ENCODE measurements at regions of chr4 and their contacts with region 1.

Region 1: DNA sequence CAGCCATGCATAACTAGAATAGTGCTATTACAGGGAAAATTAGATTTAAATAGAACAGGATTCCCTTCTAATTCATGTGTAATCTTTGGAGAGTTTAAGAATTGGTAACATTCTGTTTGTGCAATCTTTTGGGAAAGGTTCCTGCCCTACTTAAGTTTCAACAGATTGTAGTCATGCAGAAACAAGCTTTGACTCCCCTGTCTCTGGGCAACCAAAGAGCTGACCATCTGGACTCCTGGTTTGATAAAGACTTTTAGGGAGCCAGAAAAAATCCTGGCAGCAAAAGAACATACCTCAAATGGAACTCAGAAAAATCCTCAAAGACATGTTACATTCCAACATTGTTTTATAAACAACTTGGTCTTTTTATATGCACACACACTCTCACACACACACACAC is 191.1 kb upstream of the NEIL3 start:
- DNase-seq: peak; percentile 99
- ATAC-seq: peak; percentile 92
- H3K4me3 ChIP-seq: no peak overlapping the region
- H3K27ac ChIP-seq: peak overlapping the region; percentile 74; the same call in 1 of the 2 replicates
- H3K4me1 ChIP-seq: peaks cover 2% of the 10 kb centered on the region
- H3K27me3 ChIP-seq: no peaks in the 10 kb centered on the region
- CTCF ChIP-seq: no peak
- POLR2A ChIP-seq: no peak
- RAD21 ChIP-seq: no peak

Region 2: DNA sequence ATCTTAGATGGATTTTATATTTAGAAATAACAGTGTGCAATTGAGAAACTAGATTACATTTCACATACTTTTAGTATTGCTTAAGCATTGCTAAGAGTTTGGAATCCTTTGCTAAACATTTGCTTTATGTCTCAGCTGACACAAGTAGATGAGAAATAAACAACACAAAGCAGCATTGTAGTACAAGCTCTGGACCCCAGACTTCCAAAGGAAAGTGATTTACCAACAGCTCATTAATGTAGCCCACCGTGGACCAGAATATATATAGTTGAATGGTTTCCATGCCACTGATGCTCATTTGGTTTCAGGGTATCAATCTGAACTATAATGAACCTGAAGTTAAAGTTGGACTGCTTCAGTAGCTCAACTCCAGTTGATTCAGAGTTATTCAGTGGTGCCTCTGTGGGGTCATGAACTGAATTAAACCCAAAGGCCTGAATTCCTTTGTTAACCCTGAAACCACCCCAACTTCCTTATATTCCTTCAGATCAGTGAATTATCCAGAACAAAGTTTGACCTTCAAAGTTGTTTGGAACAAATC is 59.0 kb after region 1 on chr4:
- CTCF ChIA-PET with region 1: no interaction called
- POLR2A ChIA-PET with region 1: no interaction called
- dilution Hi-C with region 1: no loop called
- in situ Hi-C with region 1: no loop called
- intact Hi-C with region 1: loop called (anchors 2 kb)
- DNase-seq: peak; percentile 89
- ATAC-seq: peak; percentile 91
- H3K4me3 ChIP-seq: no peak overlapping the region
- H3K27ac ChIP-seq: peak overlapping the region; percentile 85
- H3K4me1 ChIP-seq: peaks cover 10% of the 10 kb centered on the region
- H3K27me3 ChIP-seq: no peaks in the 10 kb centered on the region
- CTCF ChIP-seq: no peak
- POLR2A ChIP-seq: no peak
- RAD21 ChIP-seq: no peak

Region 3: GRCh38 chr4:177339477-177340374 is 221.1 kb after region 1 on chr4:
- CTCF ChIA-PET with region 1: no interaction called
- POLR2A ChIA-PET with region 1: no interaction called
- dilution Hi-C with region 1: no loop called
- in situ Hi-C with region 1: loop called (anchors 10 kb)
- intact Hi-C with region 1: no loop called
- DNase-seq: peak; percentile 51
- ATAC-seq: peak; percentile 84
- H3K4me3 ChIP-seq: no peak overlapping the region
- H3K27ac ChIP-seq: no peak overlapping the region; the same call in 1 of the 2 replicates
- H3K4me1 ChIP-seq: peaks cover 2% of the 10 kb centered on the region; the same call in 1 of the 2 replicates
- H3K27me3 ChIP-seq: no peaks in the 10 kb centered on the region
- CTCF ChIP-seq: peak; percentile 79
- POLR2A ChIP-seq: no peak
- RAD21 ChIP-seq: peak; percentile 80

Region 4: GRCh38 chr4:177484613-177485021 is 366.0 kb after region 1 on chr4:
- CTCF ChIA-PET with region 1: no interaction called
- POLR2A ChIA-PET with region 1: no interaction called
- dilution Hi-C with region 1: no loop called
- in situ Hi-C with region 1: no loop called
- intact Hi-C with region 1: loop called (anchors 5 kb)
- DNase-seq: peak; percentile 97
- ATAC-seq: peak; percentile 75
- H3K4me3 ChIP-seq: no peak overlapping the region
- H3K27ac ChIP-seq: peak overlapping the region; percentile 96
- H3K4me1 ChIP-seq: peaks cover 10% of the 10 kb centered on the region
- H3K27me3 ChIP-seq: no peaks in the 10 kb centered on the region
- CTCF ChIP-seq: no peak
- POLR2A ChIP-seq: no peak
- RAD21 ChIP-seq: no peak

Region 5: GRCh38 chr4:177680308-177680707 is 561.7 kb after region 1 on chr4:
- CTCF ChIA-PET with region 1: no interaction called
- POLR2A ChIA-PET with region 1: no interaction called
- dilution Hi-C with region 1: no loop called
- in situ Hi-C with region 1: no loop called
- intact Hi-C with region 1: no loop called
- DNase-seq: no peak
- ATAC-seq: no peak
- H3K4me3 ChIP-seq: no peak overlapping the region
- H3K27ac ChIP-seq: no peak overlapping the region
- H3K4me1 ChIP-seq: peaks cover 2% of the 10 kb centered on the region; the same call in 1 of the 2 replicates
- H3K27me3 ChIP-seq: no peaks in the 10 kb centered on the region
- CTCF ChIP-seq: no peak
- POLR2A ChIP-seq: no peak
- RAD21 ChIP-seq: no peak